Left lung (tissue), 14 donors: ENCODE measurements at regions of chr20 and their contacts with region 1.

Region 1: GRCh38 chr20:62616728-62617621 is 25.3 kb upstream of the SLCO4A1 start:
- DNase-seq: peak; percentile 59 to 96 (median 81)
- ATAC-seq: peak; percentile 92
- H3K4me3 ChIP-seq: peak overlapping the region in 1 of 2 donors; percentile 0
- H3K27ac ChIP-seq: peak overlapping the region; percentile 78 to 94
- H3K4me1 ChIP-seq: peaks cover 0 to 59% of the 10 kb centered on the region in 2 donors
- H3K27me3 ChIP-seq: no peaks in the 10 kb centered on the region
- CTCF ChIP-seq: peak; percentile 95 to 99

Region 2: GRCh38 chr20:62500237-62500864 is 116.6 kb before region 1 on chr20:
- intact Hi-C with region 1: loop called in 1 of 2 experiments (anchors 5 kb)
- DNase-seq: peak in 3 of 4 donors; percentile 73 to 95 (median 75)
- ATAC-seq: peak; percentile 88
- H3K4me3 ChIP-seq: no peak overlapping the region
- H3K27ac ChIP-seq: no peak overlapping the region
- H3K4me1 ChIP-seq: peaks cover 0 to 27% of the 10 kb centered on the region in 2 donors
- H3K27me3 ChIP-seq: peaks cover 0 to 24% of the 10 kb centered on the region in 2 donors
- CTCF ChIP-seq: peak; percentile 73 to 86